ENCODE measurements at regions of chr10 and their contacts with region 1.

Region 1: DNA sequence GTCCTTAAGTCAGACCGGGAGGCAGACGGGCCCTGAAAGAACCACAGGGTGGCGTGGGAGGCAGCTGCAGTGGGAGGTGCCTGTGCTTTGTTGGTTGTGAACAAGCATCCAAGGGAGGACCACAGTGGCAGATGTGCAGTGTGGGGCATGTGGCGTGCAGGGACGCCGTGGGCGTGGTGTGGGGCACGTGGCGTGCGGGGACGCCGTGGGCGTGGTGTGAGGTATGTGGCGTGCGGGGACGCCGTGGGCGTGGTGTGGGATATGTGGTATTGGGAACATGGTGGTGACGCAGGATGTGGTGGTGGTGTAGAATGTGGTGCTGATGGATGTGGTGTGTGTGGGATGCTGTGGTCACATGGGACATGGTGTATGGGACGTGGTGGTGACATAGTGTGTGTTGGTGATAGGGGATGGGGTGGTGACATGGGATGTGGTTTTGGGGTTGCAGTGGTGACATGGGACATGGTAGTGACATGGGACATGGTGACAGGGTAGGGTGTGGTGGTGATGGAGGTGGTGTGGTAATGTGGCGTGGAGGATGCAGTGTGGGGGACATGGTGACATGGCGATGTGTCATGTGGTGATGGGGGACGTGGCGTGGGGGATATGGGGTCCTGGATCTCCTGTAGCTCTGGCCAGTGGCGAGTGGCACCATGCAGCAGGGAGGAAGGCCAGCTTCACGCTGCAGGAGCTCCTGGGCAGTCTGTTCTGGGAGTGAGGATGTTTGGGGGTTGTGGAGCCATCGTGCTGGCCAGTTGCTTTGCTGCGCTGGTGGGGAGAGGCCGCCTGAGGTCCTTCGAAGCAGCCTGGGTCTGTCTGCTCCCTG is 78.8 kb downstream of the INPP5A start:
- DNase-seq: peak; percentile 66
- H3K4me3 Mint-ChIP-seq: no peak overlapping the region
- H3K27ac Mint-ChIP-seq: peak overlapping the region; percentile 82
- H3K4me1 Mint-ChIP-seq: peaks cover 18% of the 10 kb centered on the region
- H3K27me3 Mint-ChIP-seq: peaks cover 3% of the 10 kb centered on the region

Region 2: GRCh38 chr10:132571650-132572535 is 44.5 kb before region 1 on chr10:
- intact Hi-C with region 1: loop called (anchors 1 kb)
- DNase-seq: peak; percentile 72
- H3K4me3 Mint-ChIP-seq: peak overlapping the region; percentile 18
- H3K27ac Mint-ChIP-seq: peak overlapping the region; percentile 64
- H3K4me1 Mint-ChIP-seq: peaks cover 21% of the 10 kb centered on the region
- H3K27me3 Mint-ChIP-seq: peaks cover 4% of the 10 kb centered on the region

Region 3: DNA sequence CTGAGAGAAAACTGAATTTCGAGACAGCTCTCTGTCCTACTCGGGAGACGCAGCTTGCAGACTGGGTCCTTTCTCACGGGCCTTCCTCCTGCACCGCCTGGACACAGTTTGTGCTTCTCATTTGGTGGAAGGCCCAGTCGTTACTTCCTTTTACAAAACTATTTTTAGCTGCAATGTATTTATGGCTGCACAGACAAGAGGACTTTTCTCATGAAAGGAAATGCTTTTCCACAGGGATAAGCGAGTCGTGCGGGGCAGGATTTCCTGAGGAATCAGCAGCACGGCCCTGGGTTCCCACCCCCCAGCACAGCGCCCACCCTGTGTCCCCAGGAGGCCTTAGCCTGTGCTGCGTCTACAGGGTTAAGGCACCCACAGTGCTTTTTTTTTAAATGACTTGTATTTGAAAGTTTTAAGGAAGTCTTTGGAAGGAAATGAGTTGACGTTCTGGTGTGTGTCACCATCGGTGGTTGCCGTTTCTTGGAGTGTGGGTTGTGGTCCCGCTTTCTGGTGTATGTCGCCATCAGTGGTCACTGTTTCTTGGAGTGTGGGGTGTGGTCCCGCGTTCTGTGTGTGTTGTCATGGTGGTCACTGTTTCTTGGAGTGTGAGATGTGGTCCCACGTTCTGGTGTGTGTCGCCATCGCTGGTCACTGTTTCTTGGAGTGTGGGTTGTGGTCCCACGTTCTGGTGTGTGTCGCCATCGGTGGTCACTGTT is 27.9 kb before region 1 on chr10:
- intact Hi-C with region 1: loop called (anchors 1 kb)
- DNase-seq: peak; percentile 28
- H3K4me3 Mint-ChIP-seq: no peak overlapping the region
- H3K27ac Mint-ChIP-seq: peak overlapping the region; percentile 38
- H3K4me1 Mint-ChIP-seq: peaks cover 32% of the 10 kb centered on the region
- H3K27me3 Mint-ChIP-seq: no peaks in the 10 kb centered on the region

Measured in activated T-helper 2 cell treated with anti-CD3 and anti-CD28 coated beads, Interferon-gamma antibody, Interleukin-2, Interleukin-4, amounts not matched to agents 10 μg/mL and 5 μg/mL and 100 μg/mL, durations not matched to agents 14 hours and 24 hours and 36 hours (primary cell).